ENCODE measurements at regions of chr15 and their contacts with region 1.

Region 1: GRCh38 chr15:89893696-89894455 is at the start of gene AP3S2:
- DNase-seq: peak; percentile 85 to 95 (median 90)
- H3K4me3 ChIP-seq: peak within 1 kb of the TSS; percentile 58 to 100 (median 90)
- H3K27ac ChIP-seq: peak within 1 kb of the TSS; percentile 73 to 99 (median 95)
- H3K27me3 ChIP-seq: no peaks in the 10 kb centered on the region
- CTCF ChIP-seq: peak in 39 of 56 donors; percentile 3 to 60 (median 37)
- total RNA-seq, gene AP3S2: 31.3 to 69.8 (median 52.2) TPM

Region 2: DNA sequence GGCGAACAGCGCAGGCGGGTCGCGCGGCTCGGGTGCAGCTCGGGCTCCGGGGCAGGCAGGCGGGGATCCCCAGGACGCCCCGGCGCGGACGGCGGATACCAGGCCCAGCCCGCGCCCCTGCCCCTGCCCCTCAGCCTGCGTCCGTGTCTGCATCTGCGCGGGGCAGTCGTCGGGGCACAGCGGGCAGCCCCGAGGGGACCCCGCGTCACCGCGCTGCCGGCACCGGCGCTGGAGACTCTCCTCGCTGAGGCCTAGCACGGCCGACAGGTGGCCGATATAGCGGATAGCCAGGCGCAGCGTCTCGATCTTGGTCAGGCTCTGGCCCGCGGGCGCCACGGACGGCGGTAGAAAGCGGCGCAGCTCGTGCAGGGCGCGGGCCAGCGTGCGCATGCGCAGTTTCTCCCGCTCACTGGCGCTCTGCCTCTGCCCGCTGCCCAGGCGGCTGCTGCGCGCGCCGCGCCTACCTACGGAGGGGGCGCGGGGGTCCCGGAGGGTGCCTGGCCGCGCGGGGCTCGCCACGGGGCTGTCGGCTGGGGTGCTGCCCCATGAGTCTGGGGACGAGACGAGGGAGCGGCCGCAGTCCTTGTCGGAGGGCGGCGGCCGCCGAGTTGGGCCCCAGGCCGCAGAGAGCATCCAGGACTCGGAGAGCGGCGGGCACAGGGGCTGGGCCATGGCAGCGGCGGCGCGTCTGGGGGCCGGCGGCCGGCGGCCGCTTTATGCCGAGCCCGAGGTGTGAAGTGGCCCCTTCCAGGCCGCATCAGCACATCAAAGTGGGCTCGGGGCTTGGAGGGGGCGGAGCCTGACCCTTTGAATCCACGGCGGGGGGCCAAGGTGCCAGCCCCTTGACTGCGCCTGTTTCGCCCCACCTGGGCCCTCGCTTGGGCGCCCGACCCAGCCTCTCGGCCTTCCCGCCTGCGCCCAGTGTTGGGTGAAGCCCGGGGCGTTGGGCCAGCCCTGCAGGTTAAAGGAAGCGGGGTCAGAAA is 143.0 kb before region 1 on chr15 and contains the start of gene MESP1:
- intact Hi-C with region 1: loop called (anchors 5 kb)
- DNase-seq: peak; percentile 76 to 94 (median 88)
- H3K4me3 ChIP-seq: peak within 1 kb of the TSS; percentile 65 to 92 (median 77)
- H3K27ac ChIP-seq: peak within 1 kb of the TSS in 50 of 59 donors; percentile 7 to 91 (median 74)
- H3K27me3 ChIP-seq: no peaks in the 10 kb centered on the region
- CTCF ChIP-seq: peak; percentile 34 to 85 (median 68)
- total RNA-seq, gene MESP1: 5.5 to 23.3 (median 13.3) TPM

Region 3: GRCh38 chr15:90001683-90002427 is 108.0 kb after region 1 on chr15:
- intact Hi-C with region 1: loop called (anchors 5 to 10 kb)
- DNase-seq: peak in 4 of 10 donors; percentile 22 to 63 (median 58)
- H3K4me3 ChIP-seq: peak overlapping the region; percentile 53 to 93 (median 77)
- H3K27ac ChIP-seq: peak overlapping the region in 55 of 59 donors; percentile 26 to 93 (median 82)
- H3K27me3 ChIP-seq: no peaks in the 10 kb centered on the region
- CTCF ChIP-seq: no peak

Region 4: DNA sequence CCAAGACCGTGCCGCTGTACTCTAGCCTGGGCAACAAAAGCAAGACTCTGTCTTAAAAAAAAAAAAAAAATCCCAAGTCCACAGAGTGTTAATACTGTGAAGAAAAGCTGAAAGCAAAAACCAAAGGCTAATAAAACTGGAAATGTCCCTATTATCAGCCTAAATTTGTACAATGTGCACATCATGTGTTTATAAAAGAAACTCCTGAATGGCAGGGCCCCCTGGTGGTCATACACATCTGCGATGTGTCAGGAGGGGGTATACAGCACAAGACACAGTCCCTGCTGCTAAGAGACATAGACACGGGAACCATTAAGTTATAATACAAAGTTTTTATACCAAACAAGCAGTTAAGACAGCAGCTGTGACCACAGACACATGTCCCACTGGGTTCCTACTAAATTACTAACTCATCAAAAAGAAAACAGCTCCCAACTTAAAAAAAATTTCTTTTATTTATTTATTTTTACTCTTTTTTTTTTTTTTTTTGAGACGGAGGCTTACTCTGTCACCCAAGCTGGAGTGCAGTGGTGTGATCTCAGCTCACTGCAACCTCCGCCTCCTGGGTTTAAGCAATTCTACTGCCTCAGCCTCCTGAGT is 177.4 kb after region 1 on chr15:
- intact Hi-C with region 1: loop called (anchors 5 kb)
- DNase-seq: peak in 9 of 10 donors; percentile 37 to 86 (median 76)
- H3K4me3 ChIP-seq: no peak overlapping the region
- H3K27ac ChIP-seq: peak overlapping the region in 31 of 59 donors; percentile 1 to 65 (median 32)
- H3K27me3 ChIP-seq: no peaks in the 10 kb centered on the region
- CTCF ChIP-seq: peak; percentile 61 to 92 (median 82)

Region 5: DNA sequence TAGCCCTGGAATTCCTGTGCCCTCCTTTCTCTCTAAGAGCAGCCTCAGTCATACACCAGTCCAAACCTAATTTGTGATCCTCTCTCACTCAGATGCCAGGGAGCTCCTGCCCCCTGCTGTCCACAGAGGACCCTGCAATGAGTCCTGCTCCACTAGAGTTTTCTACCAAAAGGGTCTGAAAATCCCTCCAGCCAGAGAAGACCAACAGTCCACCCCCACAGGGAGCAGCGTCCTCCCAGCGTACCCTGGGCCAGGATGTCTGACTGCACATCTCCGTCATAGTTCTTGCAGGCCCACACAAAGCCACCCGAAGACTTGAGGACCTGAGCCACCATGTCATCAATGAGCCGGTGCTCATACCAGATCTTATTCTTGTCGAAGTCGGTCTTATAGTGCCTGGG is 193.0 kb after region 1 on chr15:
- intact Hi-C with region 1: loop called in 1 of 2 experiments (anchors 5 kb)
- DNase-seq: peak in 1 of 10 donors; percentile 39
- H3K4me3 ChIP-seq: no peak overlapping the region
- H3K27ac ChIP-seq: peak overlapping the region in 21 of 59 donors; percentile 4 to 70 (median 42)
- H3K27me3 ChIP-seq: no peaks in the 10 kb centered on the region
- CTCF ChIP-seq: peak in 55 of 56 donors; percentile 27 to 68 (median 57)

Region 6: GRCh38 chr15:90101969-90102890 is 208.4 kb after region 1 on chr15 and contains the start of gene IDH2:
- intact Hi-C with region 1: loop called (anchors 5 kb)
- DNase-seq: peak; percentile 47 to 92 (median 78)
- H3K4me3 ChIP-seq: peak within 1 kb of the TSS; percentile 60 to 97 (median 84)
- H3K27ac ChIP-seq: peak within 1 kb of the TSS; percentile 91 to 100 (median 98)
- H3K27me3 ChIP-seq: no peaks in the 10 kb centered on the region
- CTCF ChIP-seq: peak in 8 of 56 donors; percentile 3 to 35 (median 12)
- total RNA-seq, gene IDH2: 40.2 to 175 (median 102) TPM

Region 7: GRCh38 chr15:90221246-90221900 is 327.5 kb after region 1 on chr15:
- intact Hi-C with region 1: loop called in 1 of 2 experiments (anchors 10 kb)
- DNase-seq: peak; percentile 53 to 84 (median 78)
- H3K4me3 ChIP-seq: no peak overlapping the region
- H3K27ac ChIP-seq: peak overlapping the region in 51 of 59 donors; percentile 14 to 81 (median 57)
- H3K27me3 ChIP-seq: no peaks in the 10 kb centered on the region
- CTCF ChIP-seq: peak; percentile 24 to 90 (median 77)

Region 8: DNA sequence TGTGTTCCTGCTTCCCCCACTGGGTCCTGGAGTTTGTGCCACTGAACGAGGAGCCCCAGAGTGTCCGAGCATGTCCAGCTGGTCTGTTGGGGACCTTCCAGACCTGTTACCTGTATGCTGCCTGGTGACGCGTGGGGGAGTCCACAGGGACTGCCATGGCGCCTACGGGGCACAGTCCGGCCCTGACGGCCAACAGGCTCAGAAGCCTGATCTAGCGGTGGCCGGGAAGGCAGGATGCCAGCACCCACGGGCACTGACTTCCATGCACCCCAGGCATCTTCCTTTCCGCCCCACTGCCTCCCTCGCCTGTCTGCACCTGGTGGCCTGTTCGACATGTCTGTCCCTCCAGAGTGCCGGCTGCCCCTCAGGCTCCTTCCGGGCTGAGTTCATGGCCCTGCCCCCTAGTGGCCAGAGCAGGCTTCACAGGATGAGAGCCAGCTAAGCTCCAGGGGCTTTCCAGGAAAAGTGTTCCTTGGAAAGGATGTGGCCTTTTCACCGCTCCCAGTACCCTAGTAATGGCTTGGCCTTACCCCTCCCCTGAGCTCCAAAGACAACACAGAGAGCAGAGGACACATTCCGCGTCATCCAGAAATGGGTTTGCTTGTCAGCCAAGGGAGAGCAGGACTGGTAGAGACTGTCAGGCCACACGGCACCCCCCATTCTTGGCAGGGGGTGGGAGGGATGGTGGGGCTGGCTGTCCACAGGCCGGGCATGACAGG is 407.3 kb after region 1 on chr15:
- intact Hi-C with region 1: no loop called
- DNase-seq: peak in 3 of 10 donors; percentile 35 to 78 (median 58)
- H3K4me3 ChIP-seq: no peak overlapping the region
- H3K27ac ChIP-seq: peak overlapping the region in 49 of 59 donors; percentile 2 to 87 (median 64)
- H3K27me3 ChIP-seq: no peaks in the 10 kb centered on the region
- CTCF ChIP-seq: peak; percentile 33 to 78 (median 64)